GM10248 (cell line): ENCODE measurements at regions of chr10 and their contacts with region 1.

Region 1: GRCh38 chr10:79249186-79250121 is 97.8 kb upstream of the PPIF start:
- DNase-seq: peak; percentile 75
- CTCF ChIP-seq: no peak

Region 2: DNA sequence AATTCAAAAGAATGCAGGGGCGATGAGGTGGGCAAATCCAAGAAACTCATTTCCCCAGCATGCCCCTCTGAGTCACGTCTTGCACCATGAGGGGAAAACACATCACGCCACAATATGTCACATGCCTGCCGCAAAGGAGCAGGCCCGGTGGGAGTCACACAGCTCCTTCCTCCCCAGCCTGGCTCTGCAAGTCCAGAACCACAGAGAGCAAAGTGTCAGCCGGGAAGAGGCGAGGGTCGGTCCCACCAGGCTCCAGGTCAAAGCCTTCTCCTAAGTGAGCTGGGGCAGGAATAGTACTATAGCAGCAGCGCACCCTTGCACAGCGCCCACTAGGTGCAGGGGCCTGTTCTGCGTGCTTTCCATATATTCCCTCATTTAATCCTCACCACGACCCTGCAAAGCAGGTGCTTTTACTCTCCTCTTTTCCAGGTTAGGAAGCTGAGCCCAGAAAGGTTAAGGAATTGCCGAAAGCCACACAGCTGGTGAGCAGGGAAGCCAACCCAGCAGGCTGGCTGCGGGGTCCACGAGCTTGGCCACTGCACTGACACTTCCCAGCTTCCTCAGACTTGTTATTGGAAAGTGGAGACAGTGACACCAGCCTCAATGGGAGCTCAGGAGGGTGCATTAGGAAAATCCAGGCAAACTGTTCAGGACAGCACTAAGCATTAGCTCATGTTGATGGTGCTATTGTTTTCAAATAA is 274.7 kb before region 1 on chr10:
- CTCF ChIA-PET with region 1: no interaction called
- POLR2A ChIA-PET with region 1: no interaction called
- DNase-seq: peak; percentile 62
- CTCF ChIP-seq: peak; percentile 56

Region 3: DNA sequence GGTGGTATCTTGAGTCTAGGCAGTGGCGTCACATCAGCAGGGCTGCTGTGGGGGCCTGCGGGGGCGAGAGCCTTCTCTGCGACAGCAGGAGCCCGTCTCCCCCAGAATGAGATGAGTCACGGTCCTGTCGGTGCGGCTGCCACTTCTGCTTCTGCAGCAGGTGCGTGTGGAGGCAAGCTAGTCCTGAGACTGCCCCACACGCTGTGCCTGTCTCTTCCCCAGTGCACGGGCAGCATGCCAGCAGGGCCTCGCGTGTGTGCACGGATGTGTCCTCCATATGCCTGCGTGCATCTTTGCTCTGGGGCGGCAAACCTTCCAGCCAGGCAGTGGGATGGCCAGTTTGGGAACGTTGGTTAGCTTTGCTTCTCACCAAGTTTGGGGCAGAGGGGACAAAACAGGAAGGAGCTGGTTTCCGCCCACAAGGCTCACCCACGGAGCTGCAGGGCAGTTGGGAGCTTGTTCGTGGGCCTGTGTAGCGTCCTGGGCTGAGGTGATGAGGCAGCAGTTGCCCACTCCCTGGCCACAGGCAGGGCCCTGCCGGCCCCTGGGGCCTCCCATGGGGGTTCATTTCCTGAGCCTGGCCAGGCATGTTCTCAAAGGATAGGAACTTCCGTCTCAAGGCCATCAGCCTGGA is 37.0 kb after region 1 on chr10:
- CTCF ChIA-PET with region 1: interaction called, 18 read pairs
- POLR2A ChIA-PET with region 1: interaction called, 20 read pairs
- DNase-seq: peak; percentile 95
- CTCF ChIP-seq: no peak